ENCODE measurements at regions of chr12 and their contacts with region 1.

Region 1: DNA sequence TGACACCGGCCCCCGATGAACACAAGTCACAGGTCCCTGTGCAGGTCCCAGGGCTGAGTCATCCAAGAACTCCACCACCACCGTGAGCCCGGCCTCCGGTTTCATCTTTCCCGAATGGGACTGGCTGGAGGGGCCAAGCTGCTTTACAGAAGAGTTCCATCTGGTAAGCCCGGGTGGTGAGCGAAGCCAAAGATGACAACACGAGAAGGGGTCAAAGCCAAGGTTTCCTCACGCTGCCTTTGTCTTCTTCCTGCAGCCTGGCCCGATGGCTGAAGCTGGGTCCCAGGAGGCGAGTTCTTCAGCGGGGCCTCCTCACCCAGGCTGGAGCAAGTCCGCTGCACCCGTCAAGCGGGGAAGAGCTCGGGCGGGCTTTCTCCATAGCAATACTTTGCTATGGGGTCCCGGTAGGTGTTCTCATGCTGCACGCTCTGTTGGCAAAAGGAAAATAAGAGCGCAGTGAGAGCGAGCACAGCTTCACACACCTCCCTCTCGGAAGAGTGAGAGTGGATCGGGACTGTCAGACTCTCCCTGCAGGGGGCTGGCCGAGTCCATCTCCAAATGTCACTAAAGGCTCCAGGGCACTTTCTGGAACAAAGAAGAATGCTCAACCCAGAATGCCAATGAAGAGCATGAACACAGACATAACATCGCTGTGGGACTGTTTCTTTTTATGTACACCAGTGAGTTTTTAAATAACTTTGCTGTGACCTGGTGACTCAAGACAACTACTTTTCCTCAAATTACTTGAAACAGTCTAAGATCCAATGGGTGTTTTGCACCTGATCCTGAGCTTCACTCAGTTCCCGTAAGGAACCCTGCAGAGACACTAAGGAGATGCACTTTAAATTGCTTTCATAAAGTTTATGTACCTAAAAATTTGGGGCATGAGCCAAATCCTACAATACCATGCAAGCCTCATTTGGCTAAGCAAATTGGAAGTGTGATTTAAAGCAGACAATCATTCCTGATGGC is 20.1 kb downstream of the SPRING1 start:
- DNase-seq: no peak
- H3K4me3 ChIP-seq: peak overlapping the region; percentile 2
- H3K27ac ChIP-seq: peak overlapping the region; percentile 13
- H3K4me1 ChIP-seq: peaks cover 54% of the 10 kb centered on the region
- H3K27me3 ChIP-seq: no peaks in the 10 kb centered on the region
- CTCF ChIP-seq: no peak

Region 2: DNA sequence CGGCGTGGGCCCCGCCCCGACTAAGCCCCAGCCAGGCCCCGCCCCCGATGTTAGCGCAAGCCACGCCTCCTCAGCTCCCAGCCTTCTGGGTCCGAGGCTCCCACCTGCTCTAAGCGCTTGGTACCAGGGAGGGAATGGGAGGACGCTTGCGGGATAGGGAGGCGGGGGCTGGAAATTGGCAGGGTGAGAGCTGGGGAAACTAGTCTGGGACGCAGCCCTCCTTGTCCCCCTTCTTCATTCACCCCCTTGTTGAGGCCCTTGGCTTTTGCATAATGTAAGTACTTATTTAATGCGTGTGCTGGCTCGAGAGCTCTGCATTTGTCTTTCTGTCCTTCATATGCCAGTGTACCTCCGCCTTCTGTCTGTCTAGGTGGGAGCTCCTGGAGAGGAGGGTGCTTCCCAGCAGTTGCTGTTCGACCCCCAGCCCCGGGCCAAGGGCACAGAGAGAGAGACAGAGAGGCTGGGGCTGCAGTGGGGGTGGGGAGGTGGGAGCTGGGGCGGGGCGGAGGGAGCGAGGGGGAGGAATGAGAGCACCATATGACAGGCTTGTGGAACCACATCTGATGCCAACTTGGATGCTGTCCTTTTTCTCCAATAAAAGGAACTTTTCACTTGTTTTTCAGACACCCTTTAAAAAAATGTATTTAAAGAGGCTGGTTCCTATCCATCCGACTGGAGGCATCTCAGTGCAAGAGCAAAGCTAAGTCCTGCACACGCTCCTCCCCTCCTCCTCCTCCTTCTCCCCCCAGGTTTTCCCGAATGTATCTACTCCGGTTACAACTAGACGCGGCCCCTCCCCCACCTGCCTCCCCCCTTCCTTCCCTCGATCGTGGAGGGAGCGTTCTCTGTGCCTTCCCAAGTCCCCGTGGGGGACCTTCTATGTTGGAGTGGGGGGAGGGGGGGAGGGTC is 184.2 kb before region 1 on chr12:
- CTCF ChIA-PET with region 1: interaction called, 21 read pairs
- POLR2A ChIA-PET with region 1: no interaction called
- intact Hi-C with region 1: no loop called
- DNase-seq: peak; percentile 92
- H3K4me3 ChIP-seq: peak overlapping the region; percentile 72
- H3K27ac ChIP-seq: peak overlapping the region; percentile 68
- H3K4me1 ChIP-seq: peaks cover 5% of the 10 kb centered on the region
- H3K27me3 ChIP-seq: no peaks in the 10 kb centered on the region
- CTCF ChIP-seq: no peak

Region 3: GRCh38 chr12:116568203-116568602 is 149.5 kb before region 1 on chr12:
- CTCF ChIA-PET with region 1: no interaction called
- POLR2A ChIA-PET with region 1: no interaction called
- intact Hi-C with region 1: no loop called
- DNase-seq: no peak
- H3K4me3 ChIP-seq: no peak overlapping the region
- H3K27ac ChIP-seq: no peak overlapping the region
- H3K4me1 ChIP-seq: no peaks in the 10 kb centered on the region
- H3K27me3 ChIP-seq: no peaks in the 10 kb centered on the region
- CTCF ChIP-seq: no peak